Right ventricle myocardium superior (tissue), 1 donor: ENCODE measurements at regions of chr10 and their contacts with region 1.

Region 1: DNA sequence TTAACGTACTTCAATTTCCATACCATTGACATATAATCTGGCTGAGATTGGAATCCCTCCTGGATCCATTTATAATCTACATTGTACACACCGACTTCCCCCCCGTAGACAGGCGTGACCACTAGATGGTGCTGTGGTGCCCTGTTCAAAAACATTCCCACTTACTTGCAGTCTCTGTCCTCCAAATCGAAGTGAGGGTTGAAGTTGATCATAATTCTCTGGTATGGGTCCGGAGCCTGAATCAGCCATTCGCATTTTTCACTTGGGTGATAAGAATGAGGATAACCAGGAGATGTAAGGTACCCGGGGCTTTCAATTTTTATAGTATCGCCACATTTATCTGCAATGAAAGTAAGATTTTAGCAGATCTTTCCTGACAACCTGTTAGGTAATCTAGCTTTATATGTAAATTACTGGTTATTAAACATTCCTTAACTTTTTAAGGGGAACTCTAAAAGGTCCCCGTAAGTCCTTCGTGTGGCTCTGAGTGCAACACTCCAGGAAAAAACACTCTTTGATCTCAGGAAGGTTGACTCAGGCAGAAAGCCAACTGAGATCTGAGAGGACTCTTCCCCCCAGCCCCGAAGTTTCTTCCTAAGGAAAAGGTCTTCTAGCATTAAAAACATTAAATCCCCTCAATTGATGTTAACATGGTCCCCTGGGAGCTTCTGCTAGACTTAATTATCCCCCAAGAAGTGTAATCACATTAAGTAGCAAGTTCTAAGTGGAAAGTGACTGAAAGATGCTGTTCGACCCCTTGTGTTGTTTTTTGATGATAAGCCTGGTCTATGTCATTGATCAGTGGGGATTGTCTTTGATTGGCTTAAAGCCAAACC is 3.7 kb downstream of the NRP1 start:
- DNase-seq: peak; percentile 88
- ATAC-seq: peak; percentile 22

Region 2: DNA sequence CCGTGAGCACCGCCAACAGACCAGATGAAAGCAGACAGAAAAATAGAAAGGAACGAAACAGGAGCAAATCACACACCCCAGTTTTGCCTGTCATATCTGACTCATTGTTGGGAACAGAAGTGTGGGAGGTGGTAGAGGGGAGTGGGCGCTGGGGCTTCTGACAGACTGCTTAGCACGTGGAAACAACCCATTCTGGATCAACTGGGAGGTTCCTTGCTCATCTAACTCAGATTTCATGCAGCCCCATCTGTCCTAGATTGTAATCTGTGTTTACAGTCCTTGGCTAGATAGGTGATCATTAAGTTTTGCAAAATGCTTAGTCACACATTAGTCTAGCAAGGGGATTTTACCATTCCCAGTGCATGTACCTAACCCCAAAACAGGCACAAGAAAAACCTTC is 150.4 kb before region 1 on chr10:
- intact Hi-C with region 1: no loop called
- DNase-seq: no peak
- ATAC-seq: no peak

Region 3: GRCh38 chr10:33193057-33193700 is 137.6 kb before region 1 on chr10:
- intact Hi-C with region 1: loop called (anchors 10 kb)
- DNase-seq: peak; percentile 81
- ATAC-seq: peak; percentile 90

Region 4: DNA sequence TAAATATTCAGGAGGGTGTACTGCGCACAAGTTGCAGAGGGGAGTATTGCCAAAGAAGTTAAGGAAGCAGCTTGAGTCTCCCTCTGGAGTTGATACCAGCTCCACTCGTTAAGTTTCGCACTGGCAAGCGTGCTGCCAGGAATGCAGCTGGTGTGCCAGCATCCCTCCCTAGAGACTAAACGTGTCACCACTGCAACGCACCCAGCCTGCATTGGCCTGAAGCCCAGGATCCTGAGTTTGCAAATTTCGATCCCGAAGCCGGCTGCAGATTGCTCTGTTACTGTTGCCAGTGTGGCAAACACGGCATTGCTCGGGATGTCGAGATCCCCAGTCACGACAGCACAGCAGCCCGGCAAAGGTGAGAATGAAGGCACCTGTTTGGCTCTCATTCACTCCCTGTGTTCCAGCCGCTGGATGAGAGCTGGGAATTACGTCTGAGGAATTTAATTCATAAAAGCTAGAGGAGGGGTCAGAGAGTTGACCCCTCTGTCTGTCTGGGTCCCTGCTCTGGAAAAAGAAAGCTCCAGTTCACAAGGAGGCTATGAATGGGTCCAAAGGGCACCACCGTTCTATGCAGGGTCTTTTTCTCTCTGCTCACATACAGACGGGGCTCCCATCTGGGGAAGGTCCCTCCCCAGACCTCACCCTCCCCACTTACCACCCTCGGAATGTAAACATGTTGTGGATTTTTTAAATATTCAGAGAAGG is 57.3 kb before region 1 on chr10:
- intact Hi-C with region 1: loop called (anchors 5 kb)
- DNase-seq: peak; percentile 93
- ATAC-seq: peak; percentile 93

Region 5: GRCh38 chr10:33715303-33715975 is 384.7 kb after region 1 on chr10:
- intact Hi-C with region 1: loop called (anchors 5 kb)
- DNase-seq: peak; percentile 57
- ATAC-seq: peak; percentile 81

Region 6: DNA sequence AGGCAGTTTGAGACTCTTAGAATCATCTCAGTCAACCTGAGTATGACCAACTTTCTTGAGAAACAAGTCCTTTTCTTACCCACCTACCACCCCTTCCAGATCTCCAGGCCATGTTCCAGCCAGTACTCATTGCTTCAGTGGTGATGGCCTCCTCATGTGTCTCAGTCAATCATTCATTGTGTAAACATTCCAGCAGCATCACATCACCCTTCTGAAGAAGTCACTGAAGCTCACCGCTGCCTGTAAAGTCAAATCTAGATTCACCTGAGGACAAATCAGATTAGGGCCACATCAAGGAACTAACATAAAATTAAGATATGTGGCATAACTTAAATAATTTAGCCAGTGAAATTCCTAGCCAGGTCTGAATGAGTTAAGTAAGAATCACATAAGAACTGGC is 471.0 kb after region 1 on chr10:
- intact Hi-C with region 1: loop called (anchors 10 kb)
- DNase-seq: no peak
- ATAC-seq: no peak

Region 7: GRCh38 chr10:34637418-34637911 is 1306.7 kb after region 1 on chr10:
- intact Hi-C with region 1: loop called (anchors 5 kb)
- DNase-seq: peak; percentile 79
- ATAC-seq: peak; percentile 78